ENCODE measurements at regions of chr6 and their contacts with region 1.

Region 1: GRCh38 chr6:149964308-149965193 is 808 bp downstream of the ULBP1 start:
- DNase-seq: no peak

Region 2: GRCh38 chr6:150004783-150005717 is 40.5 kb after region 1 on chr6:
- intact Hi-C with region 1: loop called in 1 of 2 experiments (anchors 1 kb)
- DNase-seq: peak; percentile 97

Region 3: GRCh38 chr6:150142670-150143515 is 178.3 kb after region 1 on chr6 and contains the start of gene PPP1R14C:
- intact Hi-C with region 1: no loop called
- DNase-seq: no peak
- total RNA-seq, gene PPP1R14C: 1.2 TPM in 1 of 2 donors, not detected in the other

Measured in posterior vena cava (tissue), 2 donors.